HEK293 (cell line): ENCODE measurements at regions of chr19 and their contacts with region 1.

Region 1: GRCh38 chr19:30682999-30683536 is 310.9 kb downstream of the ZNF536 start:
- H3K4me3 ChIP-seq: no peak overlapping the region
- H3K27ac ChIP-seq: no peak overlapping the region
- H3K4me1 ChIP-seq: peaks cover 3% of the 10 kb centered on the region; the same call in 1 of the 2 replicates
- CTCF ChIP-seq: peak; percentile 90

Region 2: DNA sequence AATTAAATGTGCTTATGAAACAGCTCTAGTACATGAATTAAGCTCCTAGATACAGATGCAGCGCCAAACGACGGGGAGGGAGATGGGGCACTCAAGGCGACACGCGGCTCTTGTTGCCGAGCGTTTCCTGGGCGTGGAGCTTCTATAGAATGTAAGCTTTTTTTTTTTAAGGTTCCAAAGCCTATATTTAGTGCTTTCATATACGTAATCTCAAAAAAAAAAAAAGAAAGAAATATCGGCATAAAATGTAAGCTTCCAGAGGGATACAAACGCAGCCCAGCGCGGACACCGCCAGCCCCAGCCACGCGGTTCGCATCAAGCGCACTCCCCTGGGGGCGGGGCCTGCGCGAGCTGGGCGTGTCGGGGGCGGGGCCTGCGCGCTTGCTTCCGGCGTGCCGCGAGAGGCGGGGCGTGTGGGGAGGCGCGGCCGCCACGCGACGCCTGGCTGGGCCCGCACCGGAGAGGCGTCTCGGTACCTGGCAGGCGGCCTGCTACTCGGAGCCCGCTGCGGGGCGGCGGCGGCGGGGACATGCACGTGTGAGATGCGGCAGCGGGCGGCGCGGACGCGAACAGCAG is 741.2 kb before region 1 on chr19 and contains the start of gene URI1:
- CTCF ChIA-PET with region 1: no interaction called
- POLR2A ChIA-PET with region 1: no interaction called
- H3K4me3 ChIP-seq: peak within 1 kb of the TSS; percentile 79
- H3K27ac ChIP-seq: peak within 1 kb of the TSS; percentile 93
- H3K4me1 ChIP-seq: peaks cover 40% of the 10 kb centered on the region
- CTCF ChIP-seq: no peak

Region 3: GRCh38 chr19:30471441-30471840 is 211.6 kb before region 1 on chr19:
- CTCF ChIA-PET with region 1: no interaction called
- POLR2A ChIA-PET with region 1: no interaction called
- H3K4me3 ChIP-seq: no peak overlapping the region
- H3K27ac ChIP-seq: no peak overlapping the region
- H3K4me1 ChIP-seq: no peaks in the 10 kb centered on the region
- CTCF ChIP-seq: no peak

Region 4: DNA sequence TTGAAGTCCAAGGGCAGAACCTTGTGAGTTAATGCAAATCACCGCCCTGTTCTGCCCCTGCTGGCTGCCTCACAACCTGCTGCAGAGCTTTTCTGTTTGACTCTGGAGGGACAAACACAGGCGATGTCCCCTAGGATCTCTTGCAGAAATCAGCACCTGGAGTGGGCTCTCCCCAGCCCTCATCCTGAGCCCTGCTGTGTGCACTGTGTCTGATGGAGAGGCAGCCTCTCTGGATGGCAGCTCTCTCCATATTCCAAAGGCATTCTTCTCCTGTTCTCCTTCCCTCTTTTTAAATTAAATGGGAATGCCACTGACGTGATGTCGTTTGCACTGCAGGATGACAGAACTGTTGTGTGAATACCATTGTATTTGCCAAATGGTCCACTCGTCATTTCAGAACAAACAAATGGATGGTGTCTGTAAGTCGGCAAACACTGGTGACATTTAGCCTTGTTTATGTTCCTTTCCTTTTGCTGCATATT is 126.8 kb before region 1 on chr19:
- CTCF ChIA-PET with region 1: no interaction called
- POLR2A ChIA-PET with region 1: no interaction called
- H3K4me3 ChIP-seq: no peak overlapping the region
- H3K27ac ChIP-seq: no peak overlapping the region
- H3K4me1 ChIP-seq: peaks cover 8% of the 10 kb centered on the region
- CTCF ChIP-seq: no peak

Region 5: GRCh38 chr19:30696514-30696913 is 13.4 kb after region 1 on chr19:
- CTCF ChIA-PET with region 1: interaction called, 51 read pairs
- POLR2A ChIA-PET with region 1: no interaction called
- H3K4me3 ChIP-seq: no peak overlapping the region
- H3K27ac ChIP-seq: no peak overlapping the region
- H3K4me1 ChIP-seq: peaks cover 8% of the 10 kb centered on the region; the same call in 1 of the 2 replicates
- CTCF ChIP-seq: no peak

Region 6: GRCh38 chr19:30742406-30742938 is 59.4 kb after region 1 on chr19:
- CTCF ChIA-PET with region 1: interaction called, 12 read pairs
- POLR2A ChIA-PET with region 1: no interaction called
- H3K4me3 ChIP-seq: no peak overlapping the region
- H3K27ac ChIP-seq: no peak overlapping the region
- H3K4me1 ChIP-seq: no peaks in the 10 kb centered on the region
- CTCF ChIP-seq: no peak

Region 7: DNA sequence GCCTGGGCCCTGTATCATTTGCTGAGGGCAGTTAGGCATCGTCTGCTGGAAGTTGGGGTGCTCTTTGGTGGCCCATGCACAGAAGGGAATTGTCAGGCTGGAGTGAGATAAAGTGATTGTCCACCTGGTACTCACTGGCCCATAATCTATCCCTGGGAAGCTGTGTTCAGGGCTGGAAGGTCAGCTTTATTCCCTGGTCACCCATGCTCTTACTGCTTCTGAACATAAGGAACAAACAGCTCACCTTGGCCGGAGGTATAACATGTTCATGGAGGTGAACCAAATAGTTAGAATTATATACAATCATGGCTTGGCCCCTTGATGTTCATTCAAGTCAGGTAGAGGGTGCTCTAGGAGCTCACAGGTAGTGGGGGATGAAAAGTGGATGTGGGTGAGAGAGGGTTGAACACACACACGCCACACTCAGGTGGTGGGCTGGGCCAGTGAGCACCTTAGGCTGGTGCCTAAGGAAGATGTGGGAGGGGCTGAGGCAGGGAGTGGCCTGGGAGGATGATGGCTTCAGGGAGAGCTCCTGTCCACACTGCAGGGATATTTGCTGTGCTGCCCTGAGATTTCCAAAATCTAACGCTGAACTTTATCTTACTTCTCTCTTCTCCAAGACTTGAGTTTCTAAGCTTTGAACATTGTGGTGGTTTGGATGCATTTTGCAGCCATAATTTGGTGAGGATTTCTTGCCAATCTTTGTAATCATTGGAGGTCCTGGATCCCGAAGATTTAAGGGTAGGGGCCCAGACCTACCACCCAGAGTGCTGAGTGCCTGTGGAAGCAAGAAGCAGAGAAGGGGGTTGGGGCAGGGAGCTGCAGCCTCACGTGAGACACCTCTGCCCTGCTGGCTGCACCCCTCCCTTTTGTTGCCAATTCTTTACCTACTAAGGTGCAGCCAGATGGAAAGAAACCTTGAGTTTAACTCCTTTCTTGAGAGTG is 109.8 kb after region 1 on chr19:
- CTCF ChIA-PET with region 1: interaction called, 10 read pairs
- POLR2A ChIA-PET with region 1: no interaction called
- H3K4me3 ChIP-seq: no peak overlapping the region
- H3K27ac ChIP-seq: no peak overlapping the region
- H3K4me1 ChIP-seq: no peaks in the 10 kb centered on the region
- CTCF ChIP-seq: no peak

Region 8: GRCh38 chr19:30842926-30843325 is 159.9 kb after region 1 on chr19:
- CTCF ChIA-PET with region 1: no interaction called
- POLR2A ChIA-PET with region 1: no interaction called
- H3K4me3 ChIP-seq: no peak overlapping the region
- H3K27ac ChIP-seq: no peak overlapping the region
- H3K4me1 ChIP-seq: no peaks in the 10 kb centered on the region
- CTCF ChIP-seq: no peak

Region 9: GRCh38 chr19:31015778-31016177 is 332.7 kb after region 1 on chr19:
- CTCF ChIA-PET with region 1: interaction called, 10 read pairs
- POLR2A ChIA-PET with region 1: no interaction called
- H3K4me3 ChIP-seq: no peak overlapping the region
- H3K27ac ChIP-seq: no peak overlapping the region
- H3K4me1 ChIP-seq: no peaks in the 10 kb centered on the region
- CTCF ChIP-seq: no peak

Region 10: DNA sequence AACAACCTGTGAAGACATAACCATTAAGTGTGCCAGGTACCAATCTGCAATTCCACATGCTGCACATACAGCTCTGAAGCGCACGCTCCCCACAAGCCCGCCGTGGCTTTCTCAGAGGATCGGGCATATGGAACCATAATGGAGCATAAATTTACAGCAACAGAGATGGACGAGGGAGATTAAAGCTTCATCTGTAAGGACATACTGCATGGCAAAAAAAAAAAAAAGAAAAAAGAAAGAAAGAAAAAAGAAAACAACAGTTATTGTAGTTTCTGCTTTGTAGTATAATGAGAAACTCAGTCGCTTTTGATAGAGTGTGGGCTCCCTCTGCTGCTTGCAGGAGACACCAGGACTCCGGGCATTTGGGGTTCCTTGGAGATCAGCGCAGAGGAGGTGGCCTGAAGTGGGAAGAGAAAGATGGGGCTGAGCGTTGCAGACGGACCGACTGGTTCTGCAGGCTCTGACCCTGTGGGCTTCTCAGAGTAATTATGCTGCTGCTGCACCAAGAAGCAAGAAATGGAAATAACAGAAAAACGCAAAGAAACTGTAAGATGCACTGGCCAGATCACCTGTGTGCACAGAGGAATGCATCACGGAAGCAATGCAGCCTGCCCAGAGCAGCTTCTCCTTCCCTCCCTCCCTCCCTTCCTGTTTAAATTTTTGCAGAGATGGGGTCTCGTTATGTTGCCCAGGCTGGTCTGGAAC is 1887.2 kb after region 1 on chr19:
- CTCF ChIA-PET with region 1: interaction called, 12 read pairs
- POLR2A ChIA-PET with region 1: no interaction called
- H3K4me3 ChIP-seq: no peak overlapping the region
- H3K27ac ChIP-seq: no peak overlapping the region
- H3K4me1 ChIP-seq: peaks cover 2% of the 10 kb centered on the region; the same call in 1 of the 2 replicates
- CTCF ChIP-seq: peak; percentile 98